Activated B cell treated with CpG ODN at 0.5 μM for 24 hours (primary cell): ENCODE measurements at regions of chr1 and their contacts with region 1.

Region 1: GRCh38 chr1:112501810-112502641 is 6.7 kb upstream of the WNT2B start:
- DNase-seq: peak; percentile 51
- ATAC-seq: peak; percentile 69
- H3K4me3 Mint-ChIP-seq: peak overlapping the region; percentile 70
- H3K27ac Mint-ChIP-seq: no peak overlapping the region
- H3K4me1 Mint-ChIP-seq: peaks cover 34% of the 10 kb centered on the region
- H3K27me3 Mint-ChIP-seq: peaks cover 51% of the 10 kb centered on the region
- CTCF ChIP-seq: no peak

Region 2: DNA sequence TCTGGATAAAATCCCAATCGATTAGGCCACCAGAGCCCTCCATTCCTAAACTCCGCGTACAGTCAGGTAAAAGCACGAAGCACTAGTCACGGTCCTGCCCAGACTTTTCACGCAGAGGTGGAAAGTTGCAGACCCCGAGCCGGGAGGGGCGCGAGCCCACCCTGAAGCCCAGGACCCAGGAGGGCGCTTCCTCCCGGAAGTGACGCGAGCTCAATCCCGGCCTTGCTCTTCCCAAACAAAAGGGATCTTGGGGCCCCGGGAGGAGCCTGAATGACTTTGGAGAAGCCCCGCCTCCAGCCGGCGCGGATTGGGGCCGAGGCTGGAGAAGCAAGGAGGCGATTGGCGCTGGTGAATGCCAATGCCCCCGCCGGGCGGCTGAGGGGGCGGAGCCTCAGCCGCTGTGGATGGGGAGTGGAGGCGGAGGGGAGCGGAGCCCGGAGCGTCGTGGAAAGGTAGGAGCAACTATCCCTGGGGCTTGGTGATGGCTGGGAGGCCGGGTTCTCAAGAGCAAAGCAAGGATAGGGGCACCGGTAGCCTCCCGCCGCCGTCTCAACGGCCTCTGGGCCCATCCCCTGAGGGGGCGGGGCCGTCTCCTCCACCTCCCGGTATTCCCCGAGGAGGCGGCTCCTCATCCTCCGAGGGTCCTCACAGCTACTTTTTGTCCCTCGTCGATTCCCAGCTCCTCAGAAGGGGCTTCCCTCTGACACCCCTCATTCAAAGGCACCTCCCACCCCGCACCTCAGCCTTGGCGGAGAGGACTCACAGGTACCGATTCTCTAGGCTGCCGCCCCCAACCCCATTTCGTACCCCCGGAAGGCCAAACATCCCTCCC is 106.0 kb before region 1 on chr1 and contains the start of gene CTTNBP2NL:
- CTCF ChIA-PET with region 1: interaction called, 43 read pairs
- POLR2A ChIA-PET with region 1: interaction called, 4 read pairs
- intact Hi-C with region 1: loop called (anchors 2 kb)
- DNase-seq: peak; percentile 72
- ATAC-seq: peak; percentile 94
- H3K4me3 Mint-ChIP-seq: peak within 1 kb of the TSS; percentile 95
- H3K27ac Mint-ChIP-seq: peak within 1 kb of the TSS; percentile 71
- H3K4me1 Mint-ChIP-seq: peaks cover 54% of the 10 kb centered on the region
- H3K27me3 Mint-ChIP-seq: peaks cover under 1% of the 10 kb centered on the region
- CTCF ChIP-seq: no peak
- total RNA-seq, gene CTTNBP2NL: 11.7 and 14.1 TPM in 2 replicates

Region 3: GRCh38 chr1:112444269-112444668 is 57.8 kb before region 1 on chr1:
- CTCF ChIA-PET with region 1: no interaction called
- POLR2A ChIA-PET with region 1: interaction called, 12 read pairs
- intact Hi-C with region 1: no loop called
- DNase-seq: no peak
- ATAC-seq: no peak
- H3K4me3 Mint-ChIP-seq: no peak overlapping the region
- H3K27ac Mint-ChIP-seq: no peak overlapping the region
- H3K4me1 Mint-ChIP-seq: no peaks in the 10 kb centered on the region
- H3K27me3 Mint-ChIP-seq: peaks cover 3% of the 10 kb centered on the region
- CTCF ChIP-seq: no peak

Region 4: DNA sequence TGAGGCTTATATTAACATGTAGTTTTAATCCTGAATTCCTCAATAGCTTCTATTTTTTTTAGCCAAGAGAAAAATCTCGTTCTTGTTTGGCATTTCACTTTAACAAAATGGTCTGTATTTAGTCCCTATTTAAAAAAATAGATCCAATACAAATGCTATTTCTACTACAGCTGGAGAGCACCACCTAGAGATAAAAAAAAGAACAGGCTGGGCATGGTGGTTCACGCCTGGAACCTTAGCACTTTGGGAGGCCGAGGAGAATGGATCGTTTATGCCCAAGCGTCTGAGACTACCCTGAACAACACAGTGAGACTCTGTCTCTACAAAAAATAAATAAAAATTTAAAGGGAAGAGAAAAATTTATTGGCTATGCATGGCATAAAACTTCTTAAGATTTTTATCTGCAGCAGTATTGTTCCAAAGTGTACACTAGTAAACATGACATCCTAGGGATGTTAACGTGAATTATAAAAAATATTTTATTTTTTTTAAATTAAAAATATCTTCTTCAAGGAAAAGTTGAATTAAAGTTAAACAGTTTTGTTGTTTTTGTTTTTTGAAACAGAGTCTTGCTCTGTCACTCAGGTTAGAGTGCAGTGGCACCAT is 112.5 kb after region 1 on chr1:
- CTCF ChIA-PET with region 1: interaction called, 6 read pairs
- POLR2A ChIA-PET with region 1: no interaction called
- intact Hi-C with region 1: loop called (anchors 1 kb)
- DNase-seq: no peak
- ATAC-seq: no peak
- H3K4me3 Mint-ChIP-seq: no peak overlapping the region
- H3K27ac Mint-ChIP-seq: no peak overlapping the region
- H3K4me1 Mint-ChIP-seq: peaks cover 13% of the 10 kb centered on the region
- H3K27me3 Mint-ChIP-seq: no peaks in the 10 kb centered on the region
- CTCF ChIP-seq: no peak

Region 5: DNA sequence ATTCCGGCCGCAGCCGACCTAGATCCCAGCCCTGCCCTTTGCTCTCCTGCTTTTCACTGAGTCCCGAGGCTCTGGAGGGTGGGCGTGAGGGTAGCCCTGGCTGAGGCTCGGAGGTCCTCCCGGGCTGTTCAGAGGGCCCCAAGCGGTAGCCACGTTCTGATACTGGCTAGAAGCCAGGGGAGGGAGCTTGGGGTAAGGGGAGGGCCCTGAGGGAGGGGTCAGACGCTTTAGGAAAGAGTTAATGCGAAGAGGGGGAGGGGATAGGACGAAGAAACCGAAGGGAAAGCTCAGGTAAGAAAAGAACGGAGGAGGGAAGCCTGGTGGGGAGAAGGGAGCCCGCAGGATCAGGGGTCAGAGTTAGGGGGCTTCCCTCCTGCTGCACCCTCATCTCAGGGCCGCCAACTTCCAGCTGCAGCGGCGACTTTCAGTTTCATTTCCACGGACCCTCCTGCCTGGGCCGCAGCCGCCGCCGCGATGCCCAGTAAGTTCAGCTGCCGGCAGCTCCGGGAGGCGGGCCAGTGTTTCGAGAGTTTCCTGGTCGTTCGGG is 172.5 kb after region 1 on chr1 and contains the start of gene MOV10:
- CTCF ChIA-PET with region 1: interaction called, 7 read pairs
- POLR2A ChIA-PET with region 1: no interaction called
- intact Hi-C with region 1: loop called (anchors 10 kb)
- DNase-seq: peak; percentile 45
- ATAC-seq: peak; percentile 69
- H3K4me3 Mint-ChIP-seq: peak within 1 kb of the TSS; percentile 97
- H3K27ac Mint-ChIP-seq: peak within 1 kb of the TSS; percentile 88
- H3K4me1 Mint-ChIP-seq: peaks cover 35% of the 10 kb centered on the region
- H3K27me3 Mint-ChIP-seq: no peaks in the 10 kb centered on the region
- CTCF ChIP-seq: no peak
- total RNA-seq, gene MOV10: 33.3 and 36.4 TPM in 2 replicates

Region 6: GRCh38 chr1:112706908-112707663 is 205.1 kb after region 1 on chr1 and contains the start of gene RHOC:
- CTCF ChIA-PET with region 1: interaction called, 50 read pairs
- POLR2A ChIA-PET with region 1: interaction called, 3 read pairs
- intact Hi-C with region 1: loop called (anchors 1 kb)
- DNase-seq: peak; percentile 74
- ATAC-seq: peak; percentile 86
- H3K4me3 Mint-ChIP-seq: peak within 1 kb of the TSS; percentile 82
- H3K27ac Mint-ChIP-seq: no peak within 1 kb of the TSS
- H3K4me1 Mint-ChIP-seq: peaks cover 47% of the 10 kb centered on the region
- H3K27me3 Mint-ChIP-seq: no peaks in the 10 kb centered on the region
- CTCF ChIP-seq: no peak
- total RNA-seq, gene RHOC: 11.5 and 13.5 TPM in 2 replicates